ENCODE measurements at regions of chr19 and their contacts with region 1.

Region 1: DNA sequence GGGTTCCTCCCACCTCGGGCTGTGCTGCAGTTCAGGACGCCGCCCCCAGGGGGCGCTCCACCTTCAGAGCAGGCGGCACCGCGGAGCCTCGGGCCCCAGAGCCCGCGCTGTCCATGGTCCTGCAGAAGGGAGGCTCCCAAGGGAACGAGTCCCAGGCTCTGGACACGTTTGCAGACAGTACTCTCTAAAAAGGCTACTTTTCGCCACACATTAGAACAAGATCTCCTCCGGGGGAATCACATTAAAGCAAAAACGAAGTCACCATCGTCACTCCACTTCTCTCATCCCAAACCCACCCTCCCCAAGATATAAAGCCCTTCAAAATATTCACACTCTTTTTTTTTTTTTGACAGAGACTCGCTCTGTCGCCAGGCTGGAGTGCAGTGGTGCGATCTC is 4.6 kb upstream of the SIGLEC10 start:
- DNase-seq: peak; percentile 67 to 93 (median 85)
- ATAC-seq: peak; percentile 94
- H3K4me3 ChIP-seq: no peak overlapping the region
- H3K4me3 Mint-ChIP-seq: no peak overlapping the region
- H3K27ac ChIP-seq: no peak overlapping the region
- H3K27ac Mint-ChIP-seq: no peak overlapping the region
- H3K4me1 ChIP-seq: no peaks in the 10 kb centered on the region
- H3K4me1 Mint-ChIP-seq: peaks cover 8% of the 10 kb centered on the region
- H3K27me3 ChIP-seq: peaks cover 7 to 10% of the 10 kb centered on the region in 2 experiments
- H3K27me3 Mint-ChIP-seq: peaks cover 25% of the 10 kb centered on the region
- CTCF ChIP-seq: peak; percentile 97

Region 2: GRCh38 chr19:51433043-51433442 is 11.0 kb after region 1 on chr19:
- CTCF ChIA-PET with region 1: interaction called, 81 read pairs
- POLR2A ChIA-PET with region 1: no interaction called
- intact Hi-C with region 1: no loop called
- DNase-seq: no peak
- ATAC-seq: no peak
- H3K4me3 ChIP-seq: no peak overlapping the region
- H3K4me3 Mint-ChIP-seq: no peak overlapping the region
- H3K27ac ChIP-seq: no peak overlapping the region
- H3K27ac Mint-ChIP-seq: no peak overlapping the region
- H3K4me1 ChIP-seq: no peaks in the 10 kb centered on the region
- H3K4me1 Mint-ChIP-seq: peaks cover under 1% of the 10 kb centered on the region
- H3K27me3 ChIP-seq: peaks cover 0 to 2% of the 10 kb centered on the region in 2 experiments
- H3K27me3 Mint-ChIP-seq: peaks cover 1% of the 10 kb centered on the region
- CTCF ChIP-seq: no peak

Region 3: GRCh38 chr19:51473009-51473707 is 51.1 kb after region 1 on chr19:
- CTCF ChIA-PET with region 1: interaction called, 15 read pairs
- POLR2A ChIA-PET with region 1: no interaction called
- intact Hi-C with region 1: loop called (anchors 1 to 2 kb)
- DNase-seq: peak; percentile 49 to 90 (median 78)
- ATAC-seq: peak; percentile 44
- H3K4me3 ChIP-seq: no peak overlapping the region
- H3K4me3 Mint-ChIP-seq: no peak overlapping the region
- H3K27ac ChIP-seq: no peak overlapping the region
- H3K27ac Mint-ChIP-seq: no peak overlapping the region
- H3K4me1 ChIP-seq: no peaks in the 10 kb centered on the region
- H3K4me1 Mint-ChIP-seq: no peaks in the 10 kb centered on the region
- H3K27me3 ChIP-seq: peaks cover 0 to 5% of the 10 kb centered on the region in 2 experiments
- H3K27me3 Mint-ChIP-seq: peaks cover 27% of the 10 kb centered on the region
- CTCF ChIP-seq: peak; percentile 92

Region 4: GRCh38 chr19:51570962-51571575 is 149.0 kb after region 1 on chr19 and contains the start of gene ZNF175:
- CTCF ChIA-PET with region 1: no interaction called
- POLR2A ChIA-PET with region 1: no interaction called
- intact Hi-C with region 1: no loop called
- DNase-seq: peak; percentile 70 to 94 (median 87)
- ATAC-seq: peak; percentile 98
- H3K4me3 ChIP-seq: peak within 1 kb of the TSS; percentile 65 to 80
- H3K4me3 Mint-ChIP-seq: peak within 1 kb of the TSS; percentile 97
- H3K27ac ChIP-seq: no peak within 1 kb of the TSS
- H3K27ac Mint-ChIP-seq: peak within 1 kb of the TSS; percentile 85
- H3K4me1 ChIP-seq: peaks cover 19% of the 10 kb centered on the region
- H3K4me1 Mint-ChIP-seq: peaks cover 41% of the 10 kb centered on the region
- H3K27me3 ChIP-seq: no peaks in the 10 kb centered on the region
- H3K27me3 Mint-ChIP-seq: peaks cover 4% of the 10 kb centered on the region
- CTCF ChIP-seq: no peak
- total RNA-seq, gene ZNF175: 0.84 to 1.4 TPM

Region 5: GRCh38 chr19:51651216-51651846 is 229.3 kb after region 1 on chr19:
- CTCF ChIA-PET with region 1: interaction called, 3 read pairs
- POLR2A ChIA-PET with region 1: no interaction called
- intact Hi-C with region 1: loop called in 1 of 2 experiments (anchors 5 kb)
- DNase-seq: peak in 1 of 9 experiments; percentile 24
- ATAC-seq: no peak
- H3K4me3 ChIP-seq: no peak overlapping the region
- H3K4me3 Mint-ChIP-seq: no peak overlapping the region
- H3K27ac ChIP-seq: no peak overlapping the region
- H3K27ac Mint-ChIP-seq: no peak overlapping the region
- H3K4me1 ChIP-seq: no peaks in the 10 kb centered on the region
- H3K4me1 Mint-ChIP-seq: no peaks in the 10 kb centered on the region
- H3K27me3 ChIP-seq: no peaks in the 10 kb centered on the region
- H3K27me3 Mint-ChIP-seq: peaks cover 39% of the 10 kb centered on the region
- CTCF ChIP-seq: no peak